ENCODE measurements at regions of chr1 and their contacts with region 1.

Region 1: DNA sequence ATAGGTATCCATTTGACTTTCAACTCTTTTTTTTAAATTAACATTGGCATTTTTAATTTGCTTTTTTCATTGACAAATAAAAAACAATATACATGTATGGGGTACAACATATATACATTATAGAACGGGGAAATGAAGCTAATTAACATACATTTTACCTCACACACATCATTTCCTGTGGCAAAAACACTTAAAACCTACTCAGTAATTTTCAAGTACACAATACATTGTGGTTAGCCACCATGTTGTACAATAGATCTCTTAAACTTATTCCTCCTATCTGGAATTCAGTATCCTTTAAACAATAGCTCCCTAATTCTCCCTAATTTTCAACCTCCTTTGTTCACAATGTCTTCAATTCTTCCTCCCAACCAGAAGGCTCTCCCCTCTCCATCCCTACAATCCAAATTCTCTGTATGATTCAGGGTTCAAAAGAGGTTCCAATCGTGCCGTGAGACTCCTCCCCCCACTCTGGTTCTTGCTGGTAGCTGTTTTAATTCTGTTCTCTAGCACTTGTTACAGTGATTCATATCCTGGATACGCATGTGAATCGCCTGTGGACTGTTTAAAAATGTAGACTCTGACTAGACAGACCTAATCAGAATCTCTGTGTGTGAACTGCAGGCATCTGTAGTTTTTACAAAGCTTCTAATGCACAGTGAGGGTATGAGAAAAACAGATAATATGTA is 87.6 kb upstream of the DUSP10 start:
- DNase-seq: no peak

Region 2: GRCh38 chr1:221672239-221672645 is 157.2 kb before region 1 on chr1:
- intact Hi-C with region 1: no loop called
- DNase-seq: no peak

Region 3: DNA sequence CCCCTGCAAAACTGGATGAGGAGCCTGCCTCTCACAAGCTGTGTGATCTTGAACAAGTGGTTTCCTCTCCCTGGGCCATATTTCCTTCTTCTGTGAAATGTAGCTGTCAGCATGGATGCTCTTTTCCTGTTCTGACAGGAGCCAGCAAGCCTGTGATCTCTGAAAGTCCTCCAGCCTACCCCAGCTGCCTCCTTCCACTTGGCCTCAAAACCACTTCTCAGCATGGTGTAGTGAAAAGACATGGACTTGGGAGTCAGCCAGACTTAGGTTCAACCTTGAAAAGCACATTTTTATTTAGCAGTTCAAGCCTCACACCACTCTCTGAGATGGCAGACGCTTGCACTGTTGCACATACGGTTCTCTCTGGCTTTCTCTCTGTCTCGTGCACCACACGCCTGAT is 205.3 kb after region 1 on chr1:
- intact Hi-C with region 1: loop called (anchors 5 kb)
- DNase-seq: no peak

Measured in cardiac septum (tissue), 1 donor.